ENCODE measurements at regions of chr2 and their contacts with region 1.

Region 1: DNA sequence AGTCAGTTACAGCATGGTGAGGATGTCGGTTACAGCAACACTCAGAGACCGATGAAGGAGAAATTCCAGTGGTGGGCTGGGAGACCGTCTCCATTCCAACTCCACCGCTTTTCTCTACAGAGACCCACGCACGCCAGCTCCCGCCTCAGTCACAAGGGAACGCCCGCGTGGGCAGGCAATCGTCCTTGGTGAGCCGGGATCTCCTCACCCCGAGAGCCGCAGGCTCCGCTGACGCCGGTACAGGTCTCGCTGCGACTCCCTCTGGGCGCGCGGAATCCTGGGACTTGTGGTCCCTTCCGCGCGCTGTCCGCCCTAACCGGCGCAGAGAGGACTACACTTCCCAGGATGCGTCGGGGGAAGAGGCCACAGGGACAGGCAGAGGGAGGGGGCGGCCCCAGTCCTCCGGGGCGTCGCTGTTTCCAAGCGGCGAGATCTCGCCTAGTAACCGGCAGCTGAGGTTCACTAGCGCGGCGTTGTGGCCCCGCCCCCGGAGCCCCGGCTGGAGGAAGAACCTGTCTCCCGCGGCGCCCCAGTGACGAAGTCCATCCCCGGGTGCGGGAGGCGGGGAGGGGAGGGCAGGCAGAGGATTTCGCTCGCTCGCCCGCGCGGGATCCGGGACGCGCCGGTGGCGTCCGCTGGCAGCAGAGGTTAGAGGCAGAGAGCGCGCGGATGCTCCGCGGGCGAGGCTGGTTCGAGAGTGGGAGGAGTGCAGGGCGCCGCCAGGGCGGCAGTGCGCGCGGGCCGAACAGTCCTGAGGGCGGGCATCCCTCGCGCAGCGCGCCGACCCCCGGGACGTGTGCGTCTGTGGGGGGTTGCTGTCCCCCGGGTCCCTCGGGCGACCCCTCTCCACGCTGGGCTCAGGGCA is at the start of gene EML6:
- H3K4me3 Mint-ChIP-seq: peak within 1 kb of the TSS; percentile 95
- H3K27ac Mint-ChIP-seq: peak within 1 kb of the TSS; percentile 68
- H3K4me1 Mint-ChIP-seq: peaks cover 14% of the 10 kb centered on the region
- H3K27me3 Mint-ChIP-seq: peaks cover 68% of the 10 kb centered on the region

Region 2: DNA sequence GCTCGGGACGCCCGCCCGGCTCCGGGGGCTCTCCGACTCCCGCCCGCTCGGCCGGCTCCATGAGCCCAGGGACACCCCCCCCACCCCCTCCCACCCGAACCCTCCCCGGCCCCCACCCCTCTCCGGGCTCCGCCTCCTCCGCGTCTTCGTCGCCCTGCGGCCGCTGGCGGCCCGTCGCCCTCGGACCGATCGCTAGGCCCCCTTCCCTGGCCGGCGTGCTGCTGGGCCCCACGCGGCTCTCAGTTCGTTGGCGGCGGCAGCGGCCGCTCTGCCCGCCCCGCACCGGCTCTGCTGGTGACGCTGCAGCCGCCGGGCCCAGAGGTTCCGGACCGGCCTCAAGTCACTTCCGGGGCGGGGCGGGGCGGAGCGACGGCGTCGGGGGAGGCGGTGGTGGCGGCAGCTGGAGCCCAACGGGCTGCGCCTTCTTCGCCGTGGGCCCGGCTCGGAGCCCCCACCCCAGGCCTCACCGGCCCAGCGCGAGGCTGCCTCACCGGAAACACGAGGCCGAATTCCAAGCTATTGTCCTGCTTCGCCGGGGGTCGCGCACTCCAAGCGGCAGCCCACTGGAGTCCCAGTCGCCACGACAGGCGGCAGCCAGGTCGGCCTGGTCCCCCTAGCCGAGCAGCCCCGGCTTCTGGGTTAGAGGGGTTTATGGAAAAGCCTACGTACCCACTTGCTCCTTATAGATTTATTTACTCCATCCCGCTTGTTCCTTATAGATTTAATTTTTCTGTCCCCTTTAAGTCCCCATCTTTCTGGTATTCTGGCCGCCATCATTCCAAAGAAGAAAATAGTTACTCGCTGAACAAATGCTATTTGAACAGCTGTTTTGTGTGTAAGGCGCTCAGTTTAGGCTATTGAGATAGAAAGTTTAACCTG is 752.4 kb before region 1 on chr2 and contains the start of gene PSME4:
- intact Hi-C with region 1: loop called (anchors 2 kb)
- H3K4me3 Mint-ChIP-seq: peak within 1 kb of the TSS; percentile 96
- H3K27ac Mint-ChIP-seq: peak within 1 kb of the TSS; percentile 95
- H3K4me1 Mint-ChIP-seq: peaks cover 65% of the 10 kb centered on the region
- H3K27me3 Mint-ChIP-seq: no peaks in the 10 kb centered on the region

Region 3: GRCh38 chr2:54115284-54116137 is 607.9 kb before region 1 on chr2 and contains the start of gene ACYP2:
- intact Hi-C with region 1: loop called (anchors 5 kb)
- H3K4me3 Mint-ChIP-seq: peak within 1 kb of the TSS; percentile 83
- H3K27ac Mint-ChIP-seq: peak within 1 kb of the TSS; percentile 100
- H3K4me1 Mint-ChIP-seq: peaks cover 7% of the 10 kb centered on the region
- H3K27me3 Mint-ChIP-seq: peaks cover 2% of the 10 kb centered on the region

Region 4: GRCh38 chr2:54673501-54673998 is 49.8 kb before region 1 on chr2:
- intact Hi-C with region 1: loop called (anchors 1 kb)
- H3K4me3 Mint-ChIP-seq: peak overlapping the region; percentile 70
- H3K27ac Mint-ChIP-seq: peak overlapping the region; percentile 79
- H3K4me1 Mint-ChIP-seq: peaks cover 49% of the 10 kb centered on the region
- H3K27me3 Mint-ChIP-seq: peaks cover 30% of the 10 kb centered on the region

Region 5: GRCh38 chr2:54809819-54810218 is 86.5 kb after region 1 on chr2:
- intact Hi-C with region 1: no loop called
- H3K4me3 Mint-ChIP-seq: no peak overlapping the region
- H3K27ac Mint-ChIP-seq: no peak overlapping the region
- H3K4me1 Mint-ChIP-seq: no peaks in the 10 kb centered on the region
- H3K27me3 Mint-ChIP-seq: peaks cover 4% of the 10 kb centered on the region

Region 6: DNA sequence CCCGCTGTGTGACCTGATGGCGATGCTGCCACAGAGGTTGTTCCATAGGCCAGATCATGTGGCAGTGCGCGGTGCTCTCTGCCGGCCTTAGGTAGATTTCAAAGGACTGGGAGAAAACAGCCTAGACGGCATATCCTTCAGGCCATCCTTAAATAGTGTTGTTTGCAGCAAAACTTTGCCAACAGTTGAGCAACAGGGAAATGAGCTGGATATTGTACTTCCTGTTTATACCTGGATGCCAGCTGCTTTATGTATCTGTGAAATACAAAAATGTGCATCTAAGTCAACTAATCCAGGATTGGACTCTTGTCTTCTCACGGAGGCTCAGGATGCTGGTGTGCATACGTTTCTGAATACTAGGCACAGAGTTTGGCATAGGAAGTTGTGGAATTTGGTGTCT is 107.2 kb after region 1 on chr2:
- intact Hi-C with region 1: no loop called
- H3K4me3 Mint-ChIP-seq: no peak overlapping the region
- H3K27ac Mint-ChIP-seq: no peak overlapping the region
- H3K4me1 Mint-ChIP-seq: no peaks in the 10 kb centered on the region
- H3K27me3 Mint-ChIP-seq: no peaks in the 10 kb centered on the region

Region 7: DNA sequence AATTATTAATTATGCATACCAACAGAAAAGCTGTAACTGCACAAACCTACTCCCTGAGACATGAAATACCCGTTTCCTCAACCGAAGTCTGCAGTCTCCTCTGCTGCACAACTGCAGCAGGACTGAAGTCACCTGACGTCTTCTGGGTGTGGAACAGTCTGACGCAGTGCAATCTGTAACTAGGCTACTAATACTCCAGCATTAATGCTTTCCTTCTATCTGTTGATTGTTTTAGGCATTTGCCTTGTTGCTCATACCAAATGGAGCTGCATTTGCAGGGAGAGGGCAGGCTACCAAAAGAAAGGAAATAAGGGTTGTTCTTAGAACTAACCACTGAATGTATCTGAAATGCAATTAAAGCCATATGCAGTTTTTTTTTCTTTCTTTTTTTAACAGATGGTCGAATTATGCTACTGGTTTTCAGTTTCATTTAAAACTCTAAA is 286.8 kb after region 1 on chr2:
- intact Hi-C with region 1: loop called (anchors 10 kb)
- H3K4me3 Mint-ChIP-seq: peak overlapping the region; percentile 78
- H3K27ac Mint-ChIP-seq: peak overlapping the region; percentile 86
- H3K4me1 Mint-ChIP-seq: peaks cover 67% of the 10 kb centered on the region
- H3K27me3 Mint-ChIP-seq: no peaks in the 10 kb centered on the region